ENCODE measurements at regions of chr11 and their contacts with region 1.

Region 1: GRCh38 chr11:6505577-6506240 is 8.6 kb downstream of the DNHD1 start:
- DNase-seq: peak; percentile 41
- ATAC-seq: peak; percentile 72
- H3K4me3 Mint-ChIP-seq: no peak overlapping the region
- H3K27ac Mint-ChIP-seq: no peak overlapping the region
- H3K4me1 Mint-ChIP-seq: peaks cover 7% of the 10 kb centered on the region
- H3K27me3 Mint-ChIP-seq: no peaks in the 10 kb centered on the region

Region 2: GRCh38 chr11:6402561-6402981 is 103.1 kb before region 1 on chr11:
- CTCF ChIA-PET with region 1: interaction called, 11 read pairs
- POLR2A ChIA-PET with region 1: no interaction called
- DNase-seq: peak; percentile 95
- ATAC-seq: peak; percentile 93
- H3K4me3 Mint-ChIP-seq: peak overlapping the region; percentile 81
- H3K27ac Mint-ChIP-seq: peak overlapping the region; percentile 98
- H3K4me1 Mint-ChIP-seq: peaks cover 66% of the 10 kb centered on the region
- H3K27me3 Mint-ChIP-seq: no peaks in the 10 kb centered on the region

Region 3: GRCh38 chr11:6473481-6474422 is 32.0 kb before region 1 on chr11 and contains the start of gene TRIM3:
- CTCF ChIA-PET with region 1: interaction called, 10 read pairs
- POLR2A ChIA-PET with region 1: interaction called, 3 read pairs
- DNase-seq: peak; percentile 67
- ATAC-seq: peak; percentile 82
- H3K4me3 Mint-ChIP-seq: peak within 1 kb of the TSS; percentile 79
- H3K27ac Mint-ChIP-seq: peak within 1 kb of the TSS; percentile 43
- H3K4me1 Mint-ChIP-seq: peaks cover 26% of the 10 kb centered on the region
- H3K27me3 Mint-ChIP-seq: peaks cover 11% of the 10 kb centered on the region
- total RNA-seq, gene TRIM3: 5.7 to 7.5 TPM

Region 4: GRCh38 chr11:6481012-6481923 is 24.4 kb before region 1 on chr11 and contains the starts of genes ARFIP2 and TIMM10B:
- CTCF ChIA-PET with region 1: interaction called, 30 read pairs
- POLR2A ChIA-PET with region 1: interaction called, 4 read pairs
- DNase-seq: peak; percentile 99
- ATAC-seq: peak; percentile 96
- H3K4me3 Mint-ChIP-seq: peak within 1 kb of the TSS; percentile 94
- H3K27ac Mint-ChIP-seq: peak within 1 kb of the TSS; percentile 97
- H3K4me1 Mint-ChIP-seq: peaks cover 38% of the 10 kb centered on the region
- H3K27me3 Mint-ChIP-seq: no peaks in the 10 kb centered on the region
- total RNA-seq, gene ARFIP2: 38.6 to 39.8 TPM
- total RNA-seq, gene TIMM10B: 34.1 to 35.4 TPM

Region 5: DNA sequence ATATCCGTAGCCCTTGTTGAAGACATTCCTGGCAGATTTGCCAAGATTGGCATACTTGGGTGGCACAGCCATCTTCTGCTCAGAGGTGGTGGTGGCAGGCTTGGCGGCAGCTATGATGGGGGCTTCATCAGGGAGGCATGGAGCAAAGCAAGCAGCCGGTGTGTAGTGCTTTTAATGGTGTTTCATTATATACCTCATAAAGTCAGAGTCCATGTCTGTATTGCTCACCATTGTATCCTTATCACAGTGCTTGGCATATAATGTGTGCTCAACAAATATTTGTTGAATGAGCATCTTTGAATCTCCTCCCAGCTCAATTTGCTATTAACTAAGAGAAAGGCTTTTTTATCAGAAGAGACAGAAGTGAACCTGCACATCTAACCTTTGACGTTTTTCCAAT is 16.4 kb before region 1 on chr11:
- CTCF ChIA-PET with region 1: interaction called, 30 read pairs
- POLR2A ChIA-PET with region 1: interaction called, 4 read pairs
- DNase-seq: no peak
- ATAC-seq: no peak
- H3K4me3 Mint-ChIP-seq: no peak overlapping the region
- H3K27ac Mint-ChIP-seq: no peak overlapping the region
- H3K4me1 Mint-ChIP-seq: no peaks in the 10 kb centered on the region
- H3K27me3 Mint-ChIP-seq: no peaks in the 10 kb centered on the region

Region 6: DNA sequence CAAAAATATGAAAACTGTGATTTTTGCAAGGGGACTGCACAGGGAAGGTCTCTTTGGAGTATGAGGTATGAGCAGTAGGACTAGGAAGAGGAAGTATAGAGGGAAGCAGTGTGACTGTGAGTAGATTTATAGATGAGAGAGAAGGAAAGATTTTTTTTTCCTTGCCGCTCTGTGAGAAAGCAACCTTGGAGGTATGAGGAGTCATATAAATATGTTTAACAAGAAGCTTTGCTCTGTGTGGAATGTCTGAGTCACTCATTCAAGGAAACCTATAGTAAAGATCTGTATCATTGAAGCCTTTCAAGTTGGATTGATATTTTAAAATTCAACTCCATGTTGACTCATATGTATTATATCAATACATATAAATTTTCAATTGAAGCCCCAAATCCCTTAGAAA is 17.5 kb after region 1 on chr11:
- CTCF ChIA-PET with region 1: interaction called, 13 read pairs
- POLR2A ChIA-PET with region 1: no interaction called
- DNase-seq: no peak
- ATAC-seq: no peak
- H3K4me3 Mint-ChIP-seq: no peak overlapping the region
- H3K27ac Mint-ChIP-seq: no peak overlapping the region
- H3K4me1 Mint-ChIP-seq: peaks cover 39% of the 10 kb centered on the region
- H3K27me3 Mint-ChIP-seq: no peaks in the 10 kb centered on the region

Region 7: DNA sequence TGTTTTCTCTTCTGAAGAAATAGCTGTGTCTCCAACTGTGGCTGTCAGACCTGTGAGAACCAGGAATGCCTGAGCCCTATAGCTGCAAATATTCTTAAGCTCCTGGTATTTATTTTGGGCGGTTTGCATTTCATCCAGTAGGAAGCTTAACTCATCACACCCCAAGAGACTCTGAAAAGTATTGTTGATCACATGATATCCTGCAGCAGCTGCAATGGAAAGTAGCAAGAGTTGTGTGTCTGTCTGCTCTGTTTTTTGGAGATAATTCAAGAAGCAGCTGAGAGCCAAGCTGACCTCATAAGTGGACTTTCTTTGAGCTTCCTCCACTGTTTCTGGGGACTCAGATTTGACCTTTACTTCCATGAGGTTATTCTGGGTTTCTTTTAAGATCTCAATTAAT is 213.9 kb after region 1 on chr11:
- CTCF ChIA-PET with region 1: no interaction called
- POLR2A ChIA-PET with region 1: no interaction called
- DNase-seq: no peak
- ATAC-seq: no peak
- H3K4me3 Mint-ChIP-seq: no peak overlapping the region
- H3K27ac Mint-ChIP-seq: no peak overlapping the region
- H3K4me1 Mint-ChIP-seq: peaks cover 37% of the 10 kb centered on the region
- H3K27me3 Mint-ChIP-seq: no peaks in the 10 kb centered on the region

Measured in activated CD8-positive, alpha-beta T cell treated with anti-CD3 and anti-CD28 coated beads, Interleukin-2, amount 10 ng/mL, durations not matched to agents 7 days and 5 days (primary cell).